ENCODE measurements at regions of chr5 and their contacts with region 1.

Region 1: DNA sequence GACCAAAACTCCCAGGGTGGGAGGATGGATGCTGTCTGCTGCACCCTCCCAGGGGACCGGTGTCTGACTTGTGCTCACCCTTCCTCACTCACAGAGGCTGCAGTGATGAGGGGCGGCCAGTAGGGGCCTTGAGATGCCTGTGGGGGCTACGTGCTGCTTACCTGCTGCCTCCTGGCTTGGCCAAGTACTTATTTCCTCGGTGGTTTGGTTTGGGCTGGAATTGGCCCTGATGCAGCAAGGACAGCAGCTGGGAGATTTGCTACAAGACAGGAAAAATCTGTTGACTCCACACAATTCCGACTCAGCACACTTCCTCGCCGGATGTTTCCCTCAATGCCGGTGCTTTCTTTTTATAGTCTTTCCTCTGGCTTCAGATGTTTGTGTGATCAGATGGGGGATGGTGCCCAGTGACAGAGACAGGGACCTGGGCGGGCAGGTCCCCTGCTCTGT is 6.6 kb downstream of the PCDH12 start:
- DNase-seq: peak; percentile 63
- H3K4me3 ChIP-seq: no peak overlapping the region
- H3K27ac ChIP-seq: no peak overlapping the region
- H3K4me1 ChIP-seq: no peaks in the 10 kb centered on the region
- H3K27me3 ChIP-seq: no peaks in the 10 kb centered on the region
- CTCF ChIP-seq: peak; percentile 43
- EP300 ChIP-seq: no peak
- RAD21 ChIP-seq: no peak

Region 2: GRCh38 chr5:141940695-141941271 is 10.6 kb before region 1 on chr5:
- CTCF ChIA-PET with region 1: interaction called, 256 read pairs
- POLR2A ChIA-PET with region 1: no interaction called
- DNase-seq: no peak
- H3K4me3 ChIP-seq: no peak overlapping the region
- H3K27ac ChIP-seq: peak overlapping the region in 1 of 2 experiments; percentile 20; a peak in 1 of 4 replicates
- H3K4me1 ChIP-seq: peaks cover 0 to 15% of the 10 kb centered on the region in 2 experiments; a peak in 1 of 4 replicates
- H3K27me3 ChIP-seq: no peaks in the 10 kb centered on the region
- CTCF ChIP-seq: no peak; the same call in 1 of the 2 replicates
- EP300 ChIP-seq: no peak
- RAD21 ChIP-seq: no peak

Measured in SK-N-SH (cell line).